ENCODE measurements at regions of chr9 and their contacts with region 1.

Region 1: DNA sequence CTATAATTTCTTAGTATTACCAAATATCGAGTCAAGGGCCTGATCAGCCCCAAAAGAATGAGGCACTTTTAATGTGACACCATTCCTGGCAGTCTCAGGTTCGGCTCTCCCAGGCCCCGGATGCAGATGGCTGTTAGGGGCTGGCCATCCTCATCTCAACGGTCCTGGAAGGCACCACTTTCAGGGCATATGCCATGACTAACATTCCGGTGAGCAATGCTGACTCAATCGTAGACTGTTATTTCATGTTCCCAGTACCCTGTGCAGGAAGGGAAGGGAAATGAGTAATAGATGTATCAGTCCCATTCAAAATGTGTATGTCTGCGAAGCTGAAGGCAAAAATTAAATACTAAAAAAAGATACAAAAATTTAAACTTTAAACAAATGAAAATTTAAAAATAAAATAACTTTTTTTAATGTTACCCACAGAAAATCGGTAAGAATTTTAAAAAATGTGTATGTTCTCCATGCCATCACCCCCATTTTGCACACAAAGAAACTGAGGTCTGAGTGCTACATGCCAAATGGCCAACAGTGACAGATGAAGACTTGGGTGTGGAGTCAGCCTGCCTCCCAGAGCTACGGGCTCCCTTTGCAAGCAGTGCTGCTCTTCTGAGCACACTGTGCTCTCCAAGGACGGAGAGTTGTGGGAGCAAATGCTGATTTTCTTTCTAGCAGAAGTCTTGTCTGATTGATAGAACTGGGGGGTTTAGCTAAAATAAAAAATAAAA is 79.0 kb downstream of the GLDC start:
- DNase-seq: peak; percentile 59
- ATAC-seq: peak; percentile 96
- H3K4me3 ChIP-seq: no peak overlapping the region
- H3K27ac ChIP-seq: peak overlapping the region; percentile 68
- H3K4me1 ChIP-seq: peaks cover 11% of the 10 kb centered on the region
- H3K27me3 ChIP-seq: no peaks in the 10 kb centered on the region
- CTCF ChIP-seq: no peak

Region 2: DNA sequence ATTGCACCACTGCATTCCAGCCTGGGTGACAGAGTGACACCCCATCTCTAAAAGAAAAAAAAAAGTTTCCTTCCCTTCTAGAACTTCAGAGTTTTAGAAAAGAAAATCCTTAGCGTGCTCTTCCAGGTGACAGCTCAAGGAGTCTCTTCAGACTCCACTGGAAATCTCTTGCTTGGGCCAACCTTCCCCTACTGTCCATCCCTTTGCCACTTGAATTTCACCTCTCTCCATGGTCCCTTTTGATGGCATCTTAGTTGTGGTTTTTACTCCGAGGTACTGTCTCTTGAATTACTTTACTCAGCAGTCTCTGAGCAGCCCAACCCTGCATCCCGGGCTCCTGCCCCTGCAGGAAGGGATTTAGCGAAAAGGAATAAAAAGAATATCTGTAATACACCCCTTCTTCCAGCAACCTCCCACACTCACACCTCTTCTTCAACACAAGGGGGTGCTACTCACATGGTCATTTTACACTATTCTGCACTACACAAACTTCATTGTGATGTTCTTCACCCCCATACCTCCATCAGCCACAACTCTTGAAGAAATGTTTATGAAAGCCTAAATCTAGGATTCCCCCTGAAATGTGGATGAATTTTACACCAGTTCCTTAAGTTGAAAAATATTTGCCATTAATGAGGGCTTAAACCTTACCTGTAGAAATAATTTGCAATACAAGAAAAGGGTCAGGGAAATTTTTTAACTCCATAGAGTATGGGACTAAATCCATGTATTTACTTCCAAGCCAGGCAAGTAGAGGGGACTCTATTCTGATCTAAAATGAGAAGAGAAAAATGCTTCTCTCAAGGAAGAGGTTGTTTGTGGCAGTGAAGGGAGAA is 212.5 kb before region 1 on chr9:
- CTCF ChIA-PET with region 1: no interaction called
- POLR2A ChIA-PET with region 1: no interaction called
- in situ Hi-C with region 1: no loop called
- intact Hi-C with region 1: loop called (anchors 2 kb)
- DNase-seq: peak; percentile 20
- ATAC-seq: peak; percentile 75; the same call in 1 of the 2 replicates
- H3K4me3 ChIP-seq: no peak overlapping the region
- H3K27ac ChIP-seq: no peak overlapping the region
- H3K4me1 ChIP-seq: no peaks in the 10 kb centered on the region
- H3K27me3 ChIP-seq: no peaks in the 10 kb centered on the region
- CTCF ChIP-seq: peak; percentile 45

Region 3: GRCh38 chr9:6506571-6506970 is 60.0 kb before region 1 on chr9:
- CTCF ChIA-PET with region 1: no interaction called
- POLR2A ChIA-PET with region 1: no interaction called
- in situ Hi-C with region 1: no loop called
- intact Hi-C with region 1: no loop called
- DNase-seq: no peak
- ATAC-seq: no peak
- H3K4me3 ChIP-seq: no peak overlapping the region
- H3K27ac ChIP-seq: no peak overlapping the region
- H3K4me1 ChIP-seq: peaks cover 9% of the 10 kb centered on the region
- H3K27me3 ChIP-seq: no peaks in the 10 kb centered on the region
- CTCF ChIP-seq: no peak

Measured in Panc1 (cell line).